Right lobe of liver (tissue), 6 donors: ENCODE measurements at regions of chr20 and their contacts with region 1.

Region 1: DNA sequence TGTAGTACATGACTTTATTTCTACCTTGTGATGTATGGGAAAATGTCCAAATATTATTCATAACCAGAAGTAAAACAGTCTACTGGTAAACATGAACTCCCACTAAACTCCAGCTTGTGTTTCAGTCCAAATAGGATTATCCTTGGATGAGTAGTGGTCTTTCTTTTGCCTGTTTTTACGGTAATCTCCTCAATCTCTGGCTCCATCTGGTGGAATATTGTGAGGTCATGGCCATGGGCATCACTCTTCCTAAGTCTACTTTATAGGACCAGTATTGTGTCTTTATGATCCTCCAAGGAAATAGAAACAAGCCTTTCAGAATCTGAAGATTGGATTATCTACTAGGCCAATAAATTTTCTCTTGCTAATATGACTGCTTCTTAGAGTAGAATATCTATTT is 505.0 kb downstream of the BMP2 start:
- DNase-seq: no peak
- ATAC-seq: peak; percentile 49 to 62 (median 55)
- H3K4me3 ChIP-seq: no peak overlapping the region
- H3K27ac ChIP-seq: no peak overlapping the region
- H3K4me1 ChIP-seq: no peaks in the 10 kb centered on the region
- H3K27me3 ChIP-seq: no peaks in the 10 kb centered on the region
- CTCF ChIP-seq: peak; percentile 37 to 61 (median 48)
- POLR2A ChIP-seq: no peak

Region 2: DNA sequence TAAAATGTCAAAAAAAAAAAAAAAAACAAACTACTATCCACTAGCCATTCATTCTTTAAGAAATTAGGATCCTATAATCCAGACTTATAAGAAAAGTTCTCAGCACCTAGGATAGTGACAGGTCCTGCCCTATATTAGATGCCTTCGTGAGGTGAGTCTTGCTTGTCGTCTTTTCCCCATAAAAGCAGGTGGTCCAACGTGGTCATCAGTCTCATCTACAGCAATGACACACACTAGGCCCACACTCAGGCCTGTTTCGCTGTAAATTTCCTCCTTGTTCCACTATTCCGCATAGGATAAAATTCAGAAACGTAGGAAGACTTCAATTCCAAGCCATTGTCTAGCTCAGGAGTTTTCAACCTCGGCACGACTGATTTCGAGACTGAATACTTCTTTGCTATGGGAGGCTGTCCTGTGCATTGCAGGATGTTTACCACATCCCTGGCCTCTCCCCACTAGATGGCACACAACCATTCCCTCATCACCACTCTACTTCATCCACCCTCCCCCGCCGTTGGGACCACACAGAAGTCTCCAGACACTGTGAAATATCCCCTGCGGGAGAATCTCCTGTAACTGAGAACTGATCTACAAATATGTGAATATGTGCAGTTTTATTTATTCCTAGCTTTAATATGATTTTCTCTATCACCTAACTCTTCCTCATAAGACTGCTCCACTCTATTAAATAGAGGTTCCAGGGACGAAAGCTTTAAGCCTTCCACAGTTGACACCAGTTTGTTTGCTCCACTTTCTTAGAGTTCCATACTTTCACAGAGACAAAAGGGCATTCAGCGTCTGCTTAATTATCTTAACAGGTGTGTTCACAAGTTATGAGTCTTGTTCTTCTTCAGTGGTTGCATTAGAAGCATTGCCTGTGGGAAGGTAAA is 158.7 kb before region 1 on chr20:
- intact Hi-C with region 1: loop called in 1 of 2 experiments (anchors 10 kb)
- DNase-seq: peak in 2 of 3 donors; percentile 36 to 60
- ATAC-seq: peak; percentile 97 to 100 (median 99)
- H3K4me3 ChIP-seq: no peak overlapping the region
- H3K27ac ChIP-seq: no peak overlapping the region
- H3K4me1 ChIP-seq: no peaks in the 10 kb centered on the region
- H3K27me3 ChIP-seq: no peaks in the 10 kb centered on the region
- CTCF ChIP-seq: peak; percentile 50 to 75 (median 69)
- POLR2A ChIP-seq: no peak